A549 (cell line): ENCODE measurements at regions of chr1 and their contacts with region 1.

Region 1: DNA sequence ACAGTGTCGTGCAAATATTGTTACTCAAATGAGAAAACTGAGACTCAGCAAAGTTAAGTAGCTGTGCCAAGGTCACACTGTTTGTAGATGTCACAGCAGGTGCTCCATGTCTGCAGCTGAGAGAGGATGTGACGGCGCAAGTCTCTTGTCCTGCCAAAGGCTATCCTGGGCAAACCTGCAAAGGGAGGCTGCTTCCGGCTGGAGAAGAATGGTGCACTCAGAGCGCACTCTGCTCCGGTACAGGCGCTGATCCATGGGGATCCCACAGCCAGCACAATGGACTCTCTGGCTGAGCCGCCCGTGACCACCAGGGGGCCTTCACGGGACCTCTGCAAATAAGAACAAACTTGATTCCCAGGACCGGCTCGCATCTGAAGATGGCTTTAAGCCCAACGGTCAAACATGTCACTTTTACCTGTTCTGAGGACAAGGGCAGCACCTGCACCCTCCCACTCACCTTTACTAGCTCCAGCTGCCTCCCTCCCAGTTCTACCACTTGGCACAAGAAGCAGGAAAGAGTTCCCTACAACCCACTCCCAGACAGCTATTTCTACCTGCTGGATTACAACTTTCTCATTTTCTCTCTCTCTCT is 21.9 kb downstream of the RD3 start:
- DNase-seq: peak; percentile 83
- ATAC-seq: peak; percentile 98 to 100
- H3K4me3 ChIP-seq: no peak overlapping the region
- H3K27ac ChIP-seq: 0 out of 6 replicates have a peak overlapping the region, but pooled peaks of 1 of the 2 experiments have one; percentile 4
- H3K4me1 ChIP-seq: 0 out of 3 replicates have a peak, but pooled peaks cover 7% of the 10 kb centered on the region
- CTCF ChIP-seq: peak; percentile 83
- EP300 ChIP-seq: no peak
- POLR2A ChIP-seq: no peak
- RAD21 ChIP-seq: peak; percentile 62 to 64

Region 2: GRCh38 chr1:211415700-211416099 is 54.3 kb before region 1 on chr1:
- CTCF ChIA-PET with region 1: interaction called, 10 read pairs
- POLR2A ChIA-PET with region 1: no interaction called
- DNase-seq: no peak
- ATAC-seq: no peak
- H3K4me3 ChIP-seq: peak overlapping the region; percentile 50
- H3K27ac ChIP-seq: peak overlapping the region; percentile 71 to 95; a peak in 5 of 6 replicates
- H3K4me1 ChIP-seq: 0 out of 3 replicates have a peak, but pooled peaks cover 5% of the 10 kb centered on the region
- CTCF ChIP-seq: no peak
- EP300 ChIP-seq: no peak
- POLR2A ChIP-seq: no peak
- RAD21 ChIP-seq: no peak

Region 3: DNA sequence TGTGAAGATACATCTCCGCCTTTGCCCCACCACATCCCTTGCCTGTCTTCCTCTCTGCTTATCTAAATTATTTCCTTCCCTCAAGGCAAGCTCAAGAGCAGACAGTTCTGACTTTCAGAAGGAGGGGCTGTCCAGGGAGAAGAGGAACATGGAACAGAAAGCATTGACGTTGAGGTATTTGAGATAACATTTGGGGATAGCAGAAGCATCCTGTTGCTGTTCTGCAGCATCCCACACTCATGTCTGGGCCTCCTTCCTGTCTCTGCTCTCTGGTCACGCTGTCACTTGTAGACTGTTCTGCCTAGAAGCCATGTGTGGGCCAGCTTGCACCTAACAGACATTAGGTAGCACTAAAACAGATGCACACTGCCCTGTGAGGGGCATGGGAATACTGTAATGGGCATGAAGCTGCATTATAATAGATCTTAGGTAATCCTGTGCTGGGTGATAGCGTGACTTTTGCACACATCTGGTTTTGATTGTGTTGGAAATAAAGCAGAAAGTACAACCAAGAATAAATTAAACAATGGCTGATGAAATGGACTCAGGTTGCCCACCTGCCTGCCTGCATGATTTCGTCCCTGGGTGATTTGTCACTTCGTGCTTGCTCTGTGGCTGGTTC is 22.6 kb after region 1 on chr1:
- CTCF ChIA-PET with region 1: interaction called, 15 read pairs
- POLR2A ChIA-PET with region 1: no interaction called
- DNase-seq: no peak
- ATAC-seq: no peak
- H3K4me3 ChIP-seq: no peak overlapping the region
- H3K27ac ChIP-seq: no peak overlapping the region
- H3K4me1 ChIP-seq: no peaks in the 10 kb centered on the region
- CTCF ChIP-seq: no peak
- EP300 ChIP-seq: no peak
- POLR2A ChIP-seq: no peak
- RAD21 ChIP-seq: no peak

Region 4: DNA sequence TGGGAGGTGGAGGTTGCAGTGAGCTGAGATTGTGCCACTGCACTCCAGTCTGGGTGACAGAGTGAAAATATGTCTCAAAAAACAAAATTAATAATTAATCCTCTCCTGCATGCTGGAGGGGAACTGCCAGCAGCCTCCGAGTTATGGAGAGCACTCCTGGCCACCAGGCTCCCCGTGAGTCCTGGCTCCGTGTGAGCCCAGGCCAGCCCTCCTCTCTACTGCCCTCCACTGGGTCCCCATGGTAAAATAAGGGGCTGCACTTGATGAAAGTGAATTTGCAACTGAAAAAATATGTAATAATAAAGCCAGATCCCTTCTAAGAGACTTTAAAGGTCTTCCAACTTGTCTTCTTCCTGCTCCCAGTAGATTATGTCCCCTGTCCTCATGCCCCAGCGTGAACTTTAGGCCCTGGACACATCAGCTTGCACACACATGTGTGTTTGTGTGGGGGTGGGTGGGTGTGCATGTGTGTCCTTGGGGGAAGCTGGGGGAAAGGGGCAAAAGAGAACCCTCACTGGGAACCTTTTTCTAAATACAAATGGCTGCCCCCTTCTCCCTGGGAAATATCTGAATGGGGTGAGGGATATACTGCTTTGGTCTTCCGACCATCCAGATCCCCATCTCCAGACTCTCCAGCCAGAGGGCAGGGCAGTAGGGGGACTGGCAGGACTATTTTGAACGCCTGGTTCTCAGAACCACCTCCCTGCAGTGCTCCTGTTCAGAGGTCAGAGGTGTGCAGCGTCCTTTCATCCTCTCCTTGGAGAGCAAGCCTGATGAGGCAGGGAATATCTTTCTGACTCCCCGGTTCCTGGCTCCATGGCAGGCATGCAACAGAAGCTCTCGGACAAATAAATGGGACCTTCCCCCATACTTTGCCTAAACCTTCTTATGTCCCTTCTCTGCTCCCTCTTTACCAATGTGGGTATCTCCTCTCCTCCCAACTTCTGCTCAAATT is 179.2 kb after region 1 on chr1:
- CTCF ChIA-PET with region 1: interaction called, 31 read pairs
- POLR2A ChIA-PET with region 1: no interaction called
- DNase-seq: peak; percentile 55 to 68
- ATAC-seq: peak; percentile 65 to 88; a peak in 4 of 6 replicates
- H3K4me3 ChIP-seq: no peak overlapping the region
- H3K27ac ChIP-seq: peak overlapping the region; percentile 54 to 81
- H3K4me1 ChIP-seq: peaks cover 71% of the 10 kb centered on the region
- CTCF ChIP-seq: peak; percentile 47
- EP300 ChIP-seq: no peak
- POLR2A ChIP-seq: no peak
- RAD21 ChIP-seq: peak; percentile 48 to 61